A673 (cell line): ENCODE measurements at regions of chr11 and their contacts with region 1.

Region 1: DNA sequence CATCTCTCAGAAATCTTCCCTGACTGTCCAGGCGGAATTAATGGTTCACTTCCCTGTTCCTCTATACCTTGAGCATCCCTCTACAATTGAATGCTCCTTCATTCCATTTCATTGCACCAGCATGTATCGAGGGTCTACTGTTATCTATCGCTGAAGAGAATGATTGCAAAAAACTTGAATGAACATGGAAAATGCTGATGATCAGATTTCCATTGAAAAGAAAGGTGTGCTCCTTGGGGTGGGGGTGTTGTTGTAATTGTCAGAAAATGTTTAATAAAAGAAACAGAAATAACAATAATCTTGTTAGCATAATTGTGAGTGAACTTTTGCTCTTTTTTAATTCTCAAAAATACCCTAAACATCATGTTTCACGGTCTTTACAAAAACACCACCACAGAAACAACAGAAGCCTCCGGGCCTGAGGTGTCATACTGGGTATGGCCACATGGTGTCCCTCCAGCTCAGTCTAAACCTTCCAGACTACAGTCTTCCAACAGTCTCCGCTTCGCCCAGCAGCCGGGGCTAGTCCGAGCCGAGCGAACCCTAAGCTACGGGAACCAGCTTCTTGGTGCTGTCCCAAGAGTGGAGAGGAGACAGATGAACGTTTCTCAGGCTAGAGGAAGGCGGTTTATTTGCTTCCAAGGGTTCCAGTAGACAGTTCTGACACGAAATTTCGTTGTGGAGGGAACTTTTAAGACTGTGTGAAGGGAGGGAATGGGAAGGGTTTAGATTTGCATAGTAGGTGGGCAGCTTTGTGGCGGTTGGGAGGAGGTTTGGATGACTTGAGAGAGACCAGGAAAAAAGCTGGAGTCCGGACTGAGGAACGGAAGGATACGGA is 75.8 kb upstream of the ZBED5 start:
- DNase-seq: peak; percentile 92
- H3K4me3 ChIP-seq: peak overlapping the region; percentile 36
- H3K27ac ChIP-seq: no peak overlapping the region
- H3K4me1 ChIP-seq: no peaks in the 10 kb centered on the region
- H3K27me3 ChIP-seq: no peaks in the 10 kb centered on the region
- CTCF ChIP-seq: peak; percentile 92

Region 2: GRCh38 chr11:10808553-10809372 is 124.9 kb before region 1 on chr11 and contains the start of gene EIF4G2:
- CTCF ChIA-PET with region 1: interaction called, 3 read pairs
- POLR2A ChIA-PET with region 1: interaction called, 3 read pairs
- intact Hi-C with region 1: loop called (anchors 5 kb)
- DNase-seq: peak; percentile 99
- H3K4me3 ChIP-seq: peak within 1 kb of the TSS; percentile 94
- H3K27ac ChIP-seq: peak within 1 kb of the TSS; percentile 98
- H3K4me1 ChIP-seq: peaks cover 18% of the 10 kb centered on the region
- H3K27me3 ChIP-seq: no peaks in the 10 kb centered on the region
- CTCF ChIP-seq: no peak
- total RNA-seq, gene EIF4G2: 1,137 and 1,198 TPM in 2 replicates

Region 3: DNA sequence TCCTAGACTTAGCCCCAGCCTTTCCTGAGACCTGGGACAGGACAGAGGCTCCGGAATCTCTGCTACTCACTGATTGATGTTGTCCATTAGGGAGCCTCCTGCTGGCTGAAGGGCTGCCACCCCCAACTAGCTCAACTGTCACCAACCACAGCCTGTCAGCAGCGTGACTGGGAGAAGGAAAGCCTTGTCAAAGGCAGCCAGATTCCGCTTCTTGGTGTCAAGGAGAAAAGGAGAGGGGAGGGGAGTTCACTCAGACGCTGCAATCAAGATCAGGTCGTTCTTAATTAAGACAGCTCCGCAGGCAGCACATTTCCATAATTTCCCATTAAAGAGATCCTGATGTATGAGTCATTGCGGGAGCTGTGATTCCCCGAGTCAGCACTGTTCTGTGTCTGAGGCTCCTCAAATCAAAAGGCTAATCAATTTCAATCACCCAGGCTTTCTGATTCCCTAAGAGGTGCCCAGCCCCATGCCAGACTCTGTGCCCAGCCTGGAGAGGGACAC is 77.0 kb after region 1 on chr11:
- CTCF ChIA-PET with region 1: interaction called, 10 read pairs
- POLR2A ChIA-PET with region 1: no interaction called
- intact Hi-C with region 1: no loop called
- DNase-seq: peak; percentile 33
- H3K4me3 ChIP-seq: no peak overlapping the region
- H3K27ac ChIP-seq: no peak overlapping the region
- H3K4me1 ChIP-seq: no peaks in the 10 kb centered on the region
- H3K27me3 ChIP-seq: peaks cover 5% of the 10 kb centered on the region
- CTCF ChIP-seq: peak; percentile 40

Region 4: DNA sequence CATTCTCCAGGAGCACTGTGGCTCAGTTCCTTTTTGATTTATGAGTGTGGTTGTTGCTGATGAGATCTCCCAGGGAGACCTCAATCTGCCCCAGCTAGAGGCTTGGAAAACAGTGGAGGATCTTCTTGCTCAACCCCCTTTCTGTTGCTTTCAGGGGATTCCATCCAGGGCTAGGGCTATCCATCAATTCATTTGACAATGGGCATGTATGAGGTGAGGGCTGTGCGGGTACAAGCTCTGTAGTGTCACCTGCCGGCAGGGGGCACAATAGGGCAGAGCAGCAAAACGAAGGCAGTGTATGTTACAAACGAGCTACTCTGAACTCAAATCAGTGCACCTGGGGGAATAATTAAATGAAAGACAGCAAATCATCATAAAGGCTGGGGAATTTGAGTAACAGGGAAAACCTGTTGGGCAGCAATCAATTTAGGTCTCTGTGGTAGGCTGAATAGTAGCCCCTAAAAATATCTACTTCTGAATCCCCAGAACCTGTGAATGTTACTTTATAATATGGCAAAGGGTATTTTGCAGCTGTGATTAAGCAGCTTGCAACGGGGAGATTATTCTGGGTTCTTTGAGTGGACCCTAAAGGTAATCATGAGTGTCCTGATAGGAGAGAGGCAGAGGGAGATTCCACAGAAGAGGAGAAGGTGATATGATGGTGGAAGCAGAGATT is 94.5 kb after region 1 on chr11:
- CTCF ChIA-PET with region 1: interaction called, 12 read pairs
- POLR2A ChIA-PET with region 1: no interaction called
- intact Hi-C with region 1: no loop called
- DNase-seq: peak; percentile 66
- H3K4me3 ChIP-seq: no peak overlapping the region
- H3K27ac ChIP-seq: no peak overlapping the region
- H3K4me1 ChIP-seq: no peaks in the 10 kb centered on the region
- H3K27me3 ChIP-seq: no peaks in the 10 kb centered on the region
- CTCF ChIP-seq: peak; percentile 85

Region 5: GRCh38 chr11:11263238-11264005 is 329.7 kb after region 1 on chr11:
- CTCF ChIA-PET with region 1: no interaction called
- POLR2A ChIA-PET with region 1: no interaction called
- intact Hi-C with region 1: no loop called
- DNase-seq: peak; percentile 85
- H3K4me3 ChIP-seq: no peak overlapping the region
- H3K27ac ChIP-seq: no peak overlapping the region
- H3K4me1 ChIP-seq: peaks cover 15% of the 10 kb centered on the region
- H3K27me3 ChIP-seq: no peaks in the 10 kb centered on the region
- CTCF ChIP-seq: no peak

Region 6: GRCh38 chr11:11400635-11401232 is 467.1 kb after region 1 on chr11:
- CTCF ChIA-PET with region 1: no interaction called
- POLR2A ChIA-PET with region 1: no interaction called
- intact Hi-C with region 1: no loop called
- DNase-seq: peak; percentile 23
- H3K4me3 ChIP-seq: no peak overlapping the region
- H3K27ac ChIP-seq: no peak overlapping the region
- H3K4me1 ChIP-seq: peaks cover 9% of the 10 kb centered on the region
- H3K27me3 ChIP-seq: no peaks in the 10 kb centered on the region
- CTCF ChIP-seq: peak; percentile 53